BJ (cell line): ENCODE measurements at regions of chr12 and their contacts with region 1.

Region 1: DNA sequence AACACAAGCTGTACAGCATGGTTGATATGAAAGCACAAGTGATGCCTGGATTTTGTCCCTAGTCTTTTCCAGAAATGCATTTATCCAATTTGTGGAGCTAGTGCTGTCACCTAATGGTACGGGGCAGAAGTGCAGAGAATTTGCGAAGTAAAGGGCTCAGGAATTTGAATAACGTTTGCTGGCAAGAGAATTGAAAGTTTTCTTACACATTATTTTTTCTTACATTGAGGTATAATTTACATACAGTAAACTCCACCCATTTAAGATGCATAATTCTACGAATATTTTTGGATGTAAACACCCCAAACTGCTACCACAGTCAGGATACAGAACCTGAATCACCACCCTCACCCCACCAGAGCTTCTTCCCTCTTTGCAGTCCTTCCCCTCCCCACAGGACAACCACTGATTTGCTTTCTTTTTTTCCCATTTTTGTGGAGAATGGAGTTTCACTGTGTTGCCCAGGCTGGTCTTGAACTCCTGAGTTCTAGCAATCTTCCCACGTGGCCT is 3.5 kb downstream of the AICDA start:
- DNase-seq: no peak
- H3K4me3 ChIP-seq: no peak overlapping the region
- H3K27me3 ChIP-seq: no peaks in the 10 kb centered on the region
- CTCF ChIP-seq: peak; percentile 85

Region 2: GRCh38 chr12:8594072-8594471 is 15.0 kb before region 1 on chr12:
- CTCF ChIA-PET with region 1: interaction called, 20 read pairs
- POLR2A ChIA-PET with region 1: no interaction called
- DNase-seq: no peak
- H3K4me3 ChIP-seq: no peak overlapping the region
- H3K27me3 ChIP-seq: no peaks in the 10 kb centered on the region
- CTCF ChIP-seq: no peak

Region 3: GRCh38 chr12:9980126-9980525 is 1371.0 kb after region 1 on chr12:
- CTCF ChIA-PET with region 1: no interaction called
- POLR2A ChIA-PET with region 1: no interaction called
- DNase-seq: no peak
- H3K4me3 ChIP-seq: no peak overlapping the region
- H3K27me3 ChIP-seq: no peaks in the 10 kb centered on the region; the same call in 1 of the 2 replicates
- CTCF ChIP-seq: no peak